CD4-positive, alpha-beta T cell (primary cell): ENCODE measurements at regions of chr5 and their contacts with region 1.

Region 1: GRCh38 chr5:98214240-98215051 is 559.0 kb upstream of the RGMB start:
- DNase-seq: no peak
- ATAC-seq: no peak
- H3K4me3 ChIP-seq: no peak overlapping the region
- H3K4me3 Mint-ChIP-seq: no peak overlapping the region
- H3K27ac ChIP-seq: no peak overlapping the region
- H3K27ac Mint-ChIP-seq: no peak overlapping the region
- H3K4me1 ChIP-seq: no peaks in the 10 kb centered on the region
- H3K4me1 Mint-ChIP-seq: peaks cover 6% of the 10 kb centered on the region
- H3K27me3 ChIP-seq: no peaks in the 10 kb centered on the region
- H3K27me3 Mint-ChIP-seq: no peaks in the 10 kb centered on the region
- CTCF ChIP-seq: no peak

Region 2: GRCh38 chr5:97918620-97919019 is 295.8 kb before region 1 on chr5:
- CTCF ChIA-PET with region 1: no interaction called
- POLR2A ChIA-PET with region 1: no interaction called
- intact Hi-C with region 1: loop called in 1 of 2 experiments (anchors 5 kb)
- DNase-seq: no peak
- ATAC-seq: no peak
- H3K4me3 ChIP-seq: no peak overlapping the region
- H3K4me3 Mint-ChIP-seq: no peak overlapping the region
- H3K27ac ChIP-seq: no peak overlapping the region
- H3K27ac Mint-ChIP-seq: no peak overlapping the region
- H3K4me1 ChIP-seq: no peaks in the 10 kb centered on the region
- H3K4me1 Mint-ChIP-seq: no peaks in the 10 kb centered on the region
- H3K27me3 ChIP-seq: no peaks in the 10 kb centered on the region
- H3K27me3 Mint-ChIP-seq: no peaks in the 10 kb centered on the region
- CTCF ChIP-seq: no peak